ENCODE measurements at regions of chr2 and their contacts with region 1.

Region 1: GRCh38 chr2:200483729-200484198 is 26.1 kb downstream of the KCTD18 start:
- DNase-seq: no peak
- ATAC-seq: no peak
- H3K4me3 ChIP-seq: no peak overlapping the region
- H3K4me3 Mint-ChIP-seq: no peak overlapping the region
- H3K27ac ChIP-seq: no peak overlapping the region
- H3K27ac Mint-ChIP-seq: no peak overlapping the region
- H3K4me1 ChIP-seq: no peaks in the 10 kb centered on the region
- H3K4me1 Mint-ChIP-seq: no peaks in the 10 kb centered on the region
- H3K27me3 ChIP-seq: no peaks in the 10 kb centered on the region
- H3K27me3 Mint-ChIP-seq: peaks cover 8% of the 10 kb centered on the region
- CTCF ChIP-seq: no peak

Region 2: GRCh38 chr2:199704358-199705238 is 779.2 kb before region 1 on chr2:
- CTCF ChIA-PET with region 1: interaction called, 8 read pairs
- POLR2A ChIA-PET with region 1: no interaction called
- intact Hi-C with region 1: loop called (anchors 5 kb)
- DNase-seq: peak; percentile 37
- ATAC-seq: no peak
- H3K4me3 ChIP-seq: no peak overlapping the region
- H3K4me3 Mint-ChIP-seq: no peak overlapping the region
- H3K27ac ChIP-seq: no peak overlapping the region
- H3K27ac Mint-ChIP-seq: no peak overlapping the region
- H3K4me1 ChIP-seq: no peaks in the 10 kb centered on the region
- H3K4me1 Mint-ChIP-seq: no peaks in the 10 kb centered on the region
- H3K27me3 ChIP-seq: no peaks in the 10 kb centered on the region
- H3K27me3 Mint-ChIP-seq: peaks cover 4% of the 10 kb centered on the region
- CTCF ChIP-seq: peak; percentile 49

Region 3: DNA sequence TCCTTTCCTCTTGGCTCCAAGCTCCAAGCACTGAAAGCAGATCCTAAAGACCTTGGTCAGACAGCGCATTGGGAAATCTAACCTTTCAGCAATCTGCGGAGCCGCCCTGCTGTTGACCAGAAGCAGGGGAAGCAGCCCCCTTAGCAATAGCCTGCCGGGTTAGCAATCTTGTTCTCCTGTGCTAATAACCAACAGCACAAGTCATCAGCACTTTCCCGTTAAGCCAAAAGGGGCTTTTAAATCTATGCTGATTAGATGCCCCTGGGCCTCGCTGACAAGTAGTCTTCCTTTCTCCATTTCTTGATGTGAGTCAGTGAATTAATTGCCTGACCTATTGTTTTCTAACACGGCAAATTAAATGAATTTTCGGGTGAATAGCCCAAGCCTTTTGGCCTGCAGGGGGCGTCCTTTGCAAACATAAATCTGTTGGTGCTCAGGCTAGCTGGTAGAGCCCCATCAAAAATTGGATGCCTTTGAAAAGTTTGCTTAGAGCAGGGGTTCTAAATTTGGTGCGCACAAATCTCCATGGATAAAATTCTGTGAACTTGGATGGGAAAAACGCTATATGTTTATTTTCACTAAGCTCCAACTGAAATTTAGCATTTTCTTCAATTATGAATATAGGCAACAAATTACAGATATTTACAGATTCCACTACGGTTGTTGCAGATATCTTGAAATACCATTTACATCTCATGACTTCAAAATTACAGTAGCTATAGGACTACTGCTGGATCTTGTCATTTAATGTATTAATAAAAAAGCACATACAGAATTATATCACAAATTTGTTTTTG is 503.7 kb before region 1 on chr2:
- CTCF ChIA-PET with region 1: interaction called, 20 read pairs
- POLR2A ChIA-PET with region 1: no interaction called
- intact Hi-C with region 1: no loop called
- DNase-seq: peak; percentile 76
- ATAC-seq: no peak
- H3K4me3 ChIP-seq: no peak overlapping the region
- H3K4me3 Mint-ChIP-seq: no peak overlapping the region
- H3K27ac ChIP-seq: no peak overlapping the region
- H3K27ac Mint-ChIP-seq: no peak overlapping the region
- H3K4me1 ChIP-seq: no peaks in the 10 kb centered on the region
- H3K4me1 Mint-ChIP-seq: peaks cover 2% of the 10 kb centered on the region
- H3K27me3 ChIP-seq: peaks cover 0 to 2% (median 0%) of the 10 kb centered on the region in 4 experiments
- H3K27me3 Mint-ChIP-seq: no peaks in the 10 kb centered on the region
- CTCF ChIP-seq: peak; percentile 86

Region 4: DNA sequence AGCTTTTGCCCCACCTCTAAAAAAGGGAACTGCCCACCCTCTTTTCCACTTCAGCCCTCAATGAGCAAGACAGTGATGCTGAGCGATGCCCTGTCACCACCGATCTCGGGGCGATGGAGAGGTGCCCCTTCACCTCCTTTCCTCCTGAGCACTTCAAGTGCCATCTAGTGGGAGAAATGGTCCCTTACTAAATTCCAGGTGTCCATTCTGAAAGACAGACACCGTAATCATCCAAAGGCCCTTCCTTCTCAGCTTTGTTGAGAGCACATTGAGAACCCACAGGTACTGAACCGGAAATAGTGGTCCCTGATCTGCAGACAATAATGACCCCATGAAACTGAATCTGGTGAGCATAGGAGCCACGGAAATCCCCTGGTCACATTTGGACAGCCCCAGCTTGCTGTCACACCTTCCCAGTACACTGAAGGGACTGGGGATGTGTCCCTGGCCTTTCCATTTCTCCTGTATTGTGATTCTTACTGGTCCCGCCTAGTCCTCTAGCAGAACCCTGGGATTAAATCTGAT is 12.4 kb before region 1 on chr2:
- CTCF ChIA-PET with region 1: interaction called, 22 read pairs
- POLR2A ChIA-PET with region 1: no interaction called
- intact Hi-C with region 1: no loop called
- DNase-seq: peak; percentile 63
- ATAC-seq: peak; percentile 48
- H3K4me3 ChIP-seq: no peak overlapping the region
- H3K4me3 Mint-ChIP-seq: no peak overlapping the region
- H3K27ac ChIP-seq: no peak overlapping the region
- H3K27ac Mint-ChIP-seq: peak overlapping the region; percentile 4
- H3K4me1 ChIP-seq: peaks cover 4 to 8% of the 10 kb centered on the region in 2 donors
- H3K4me1 Mint-ChIP-seq: peaks cover 20% of the 10 kb centered on the region
- H3K27me3 ChIP-seq: no peaks in the 10 kb centered on the region
- H3K27me3 Mint-ChIP-seq: no peaks in the 10 kb centered on the region
- CTCF ChIP-seq: peak; percentile 60

Region 5: DNA sequence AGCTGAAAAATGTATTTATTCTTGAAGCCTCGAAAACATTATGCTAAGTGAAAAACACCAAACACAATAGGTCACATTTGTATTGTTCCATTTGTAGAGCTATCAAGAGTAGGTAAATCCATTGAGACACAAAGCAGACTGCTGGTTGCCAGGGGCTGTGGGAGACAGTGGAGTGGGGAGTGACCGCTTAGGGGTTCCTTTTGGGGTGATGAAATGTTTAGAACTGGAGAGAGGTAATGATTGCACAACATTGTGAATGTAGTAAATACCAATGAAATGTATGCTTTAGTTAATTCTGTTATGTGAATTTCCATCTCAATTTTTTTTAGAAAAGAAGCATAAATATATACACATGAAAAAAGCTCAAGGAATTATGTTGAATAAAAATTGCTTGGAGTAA is 10.3 kb after region 1 on chr2:
- CTCF ChIA-PET with region 1: interaction called, 11 read pairs
- POLR2A ChIA-PET with region 1: no interaction called
- intact Hi-C with region 1: no loop called
- DNase-seq: no peak
- ATAC-seq: no peak
- H3K4me3 ChIP-seq: no peak overlapping the region
- H3K4me3 Mint-ChIP-seq: no peak overlapping the region
- H3K27ac ChIP-seq: no peak overlapping the region
- H3K27ac Mint-ChIP-seq: no peak overlapping the region
- H3K4me1 ChIP-seq: no peaks in the 10 kb centered on the region
- H3K4me1 Mint-ChIP-seq: no peaks in the 10 kb centered on the region
- H3K27me3 ChIP-seq: no peaks in the 10 kb centered on the region
- H3K27me3 Mint-ChIP-seq: no peaks in the 10 kb centered on the region
- CTCF ChIP-seq: no peak

Region 6: DNA sequence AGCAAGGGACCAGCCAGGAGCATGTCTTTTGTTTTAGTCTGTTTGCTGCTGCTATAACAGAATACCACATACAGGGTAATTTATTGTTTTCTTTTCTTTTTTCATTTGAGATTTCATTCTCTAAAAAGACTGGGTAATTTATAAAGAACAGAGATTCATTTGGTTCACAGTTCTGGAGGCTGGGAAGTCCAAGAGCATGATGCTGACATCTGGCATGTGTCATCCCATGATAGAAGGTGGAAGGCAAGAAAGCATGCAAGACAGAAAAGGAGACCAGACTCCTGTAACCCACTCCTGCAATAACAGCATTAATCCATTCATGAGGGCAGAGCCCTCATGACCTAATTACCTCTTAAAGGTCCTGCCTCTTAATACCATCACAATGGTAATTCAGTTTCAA is 57.0 kb after region 1 on chr2:
- CTCF ChIA-PET with region 1: no interaction called
- POLR2A ChIA-PET with region 1: no interaction called
- intact Hi-C with region 1: no loop called
- DNase-seq: no peak
- ATAC-seq: no peak
- H3K4me3 ChIP-seq: no peak overlapping the region
- H3K4me3 Mint-ChIP-seq: no peak overlapping the region
- H3K27ac ChIP-seq: no peak overlapping the region
- H3K27ac Mint-ChIP-seq: no peak overlapping the region
- H3K4me1 ChIP-seq: no peaks in the 10 kb centered on the region
- H3K4me1 Mint-ChIP-seq: no peaks in the 10 kb centered on the region
- H3K27me3 ChIP-seq: no peaks in the 10 kb centered on the region
- H3K27me3 Mint-ChIP-seq: no peaks in the 10 kb centered on the region
- CTCF ChIP-seq: no peak

Region 7: DNA sequence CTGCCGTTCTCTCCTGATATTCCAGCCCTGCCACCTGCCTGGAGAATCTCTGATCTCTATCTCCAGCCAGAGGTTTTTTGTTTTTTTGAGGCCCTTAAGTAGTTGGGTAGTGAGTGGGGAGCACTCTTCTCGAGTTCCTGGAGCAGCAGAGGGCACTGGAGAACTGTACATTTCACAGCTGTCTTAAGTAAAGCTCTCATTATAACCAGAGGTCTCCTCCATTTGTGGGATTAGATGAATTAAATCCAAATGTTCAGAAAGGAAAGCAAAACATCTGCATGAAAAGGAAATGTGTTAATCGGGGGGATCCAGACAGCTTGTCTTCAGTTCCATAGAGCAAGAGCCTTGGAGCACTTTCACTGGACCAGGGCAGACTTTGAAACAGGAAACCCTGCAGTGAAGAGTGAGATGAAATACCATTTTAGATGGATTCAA is 134.8 kb after region 1 on chr2:
- CTCF ChIA-PET with region 1: no interaction called
- POLR2A ChIA-PET with region 1: no interaction called
- intact Hi-C with region 1: no loop called
- DNase-seq: peak; percentile 5
- ATAC-seq: no peak
- H3K4me3 ChIP-seq: no peak overlapping the region
- H3K4me3 Mint-ChIP-seq: no peak overlapping the region
- H3K27ac ChIP-seq: no peak overlapping the region
- H3K27ac Mint-ChIP-seq: no peak overlapping the region
- H3K4me1 ChIP-seq: peaks cover 0 to 5% of the 10 kb centered on the region in 2 donors
- H3K4me1 Mint-ChIP-seq: peaks cover 17% of the 10 kb centered on the region
- H3K27me3 ChIP-seq: no peaks in the 10 kb centered on the region
- H3K27me3 Mint-ChIP-seq: peaks cover 18% of the 10 kb centered on the region
- CTCF ChIP-seq: no peak

Region 8: GRCh38 chr2:200640901-200641300 is 157.1 kb after region 1 on chr2:
- CTCF ChIA-PET with region 1: no interaction called
- POLR2A ChIA-PET with region 1: no interaction called
- intact Hi-C with region 1: no loop called
- DNase-seq: no peak
- ATAC-seq: no peak
- H3K4me3 ChIP-seq: no peak overlapping the region
- H3K4me3 Mint-ChIP-seq: no peak overlapping the region
- H3K27ac ChIP-seq: no peak overlapping the region
- H3K27ac Mint-ChIP-seq: no peak overlapping the region
- H3K4me1 ChIP-seq: no peaks in the 10 kb centered on the region
- H3K4me1 Mint-ChIP-seq: no peaks in the 10 kb centered on the region
- H3K27me3 ChIP-seq: no peaks in the 10 kb centered on the region
- H3K27me3 Mint-ChIP-seq: peaks cover 11% of the 10 kb centered on the region
- CTCF ChIP-seq: no peak

Measured in B cell (primary cell).